ENCODE measurements at regions of chr11 and their contacts with region 1.

Region 1: DNA sequence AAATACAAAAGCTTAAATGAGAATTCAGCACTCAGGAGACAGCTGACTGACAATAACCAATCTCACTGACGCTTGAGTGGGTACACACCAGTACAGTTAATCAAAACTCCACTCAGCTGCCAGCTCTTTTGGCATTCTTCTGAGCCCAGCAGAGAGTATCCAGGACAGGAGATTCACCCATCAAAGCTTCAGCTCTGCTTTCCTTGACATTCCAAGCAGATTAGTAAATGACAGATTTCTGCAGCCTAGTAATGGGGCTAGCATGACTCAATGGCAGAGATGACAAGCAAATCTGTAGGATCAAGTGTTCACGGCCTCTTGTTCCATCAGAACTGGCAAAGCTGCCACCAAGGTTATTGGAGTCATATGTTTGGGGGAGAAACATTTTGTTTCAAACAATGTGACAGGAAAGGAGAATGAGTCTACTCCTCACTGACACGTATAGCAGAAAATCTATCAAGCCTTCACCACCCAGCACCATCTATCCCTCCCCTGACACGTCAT is 420.0 kb downstream of the DYNC2H1 start:
- DNase-seq: peak; percentile 96
- ATAC-seq: peak; percentile 57
- H3K4me3 ChIP-seq: no peak overlapping the region
- H3K27ac ChIP-seq: peak overlapping the region; percentile 14
- H3K4me1 ChIP-seq: peaks cover 79% of the 10 kb centered on the region
- H3K27me3 ChIP-seq: no peaks in the 10 kb centered on the region
- CTCF ChIP-seq: no peak

Region 2: GRCh38 chr11:103464420-103464819 is 64.8 kb before region 1 on chr11:
- CTCF ChIA-PET with region 1: no interaction called
- POLR2A ChIA-PET with region 1: no interaction called
- intact Hi-C with region 1: loop called (anchors 5 kb)
- DNase-seq: peak; percentile 17
- ATAC-seq: no peak
- H3K4me3 ChIP-seq: no peak overlapping the region
- H3K27ac ChIP-seq: no peak overlapping the region
- H3K4me1 ChIP-seq: no peaks in the 10 kb centered on the region
- H3K27me3 ChIP-seq: no peaks in the 10 kb centered on the region
- CTCF ChIP-seq: peak; percentile 57

Region 3: DNA sequence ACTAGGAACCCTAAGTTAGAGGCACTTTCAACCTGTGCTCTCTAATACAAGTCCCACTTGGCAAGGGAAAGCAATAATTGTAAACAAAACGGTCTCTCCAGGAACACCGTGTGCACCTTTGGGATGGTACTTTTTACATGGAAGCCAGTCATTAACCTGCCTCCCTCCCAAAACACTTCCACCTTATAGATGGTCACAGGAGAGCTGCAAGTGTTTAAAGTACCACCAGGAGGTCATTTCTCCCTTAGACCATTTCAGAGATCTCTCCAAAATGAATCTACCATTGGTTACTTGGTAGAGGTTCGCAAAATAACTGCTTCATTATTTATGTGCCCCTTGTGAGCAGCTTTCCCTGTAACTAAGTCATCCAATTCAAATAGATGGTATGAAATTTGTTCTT is 44.7 kb before region 1 on chr11:
- CTCF ChIA-PET with region 1: interaction called, 5 read pairs
- POLR2A ChIA-PET with region 1: no interaction called
- intact Hi-C with region 1: loop called (anchors 1 kb)
- DNase-seq: no peak
- ATAC-seq: no peak
- H3K4me3 ChIP-seq: no peak overlapping the region
- H3K27ac ChIP-seq: no peak overlapping the region
- H3K4me1 ChIP-seq: peaks cover 49% of the 10 kb centered on the region
- H3K27me3 ChIP-seq: no peaks in the 10 kb centered on the region
- CTCF ChIP-seq: peak; percentile 41; the same call in 1 of the 2 replicates